ENCODE measurements at regions of chr3 and their contacts with region 1.

Region 1: DNA sequence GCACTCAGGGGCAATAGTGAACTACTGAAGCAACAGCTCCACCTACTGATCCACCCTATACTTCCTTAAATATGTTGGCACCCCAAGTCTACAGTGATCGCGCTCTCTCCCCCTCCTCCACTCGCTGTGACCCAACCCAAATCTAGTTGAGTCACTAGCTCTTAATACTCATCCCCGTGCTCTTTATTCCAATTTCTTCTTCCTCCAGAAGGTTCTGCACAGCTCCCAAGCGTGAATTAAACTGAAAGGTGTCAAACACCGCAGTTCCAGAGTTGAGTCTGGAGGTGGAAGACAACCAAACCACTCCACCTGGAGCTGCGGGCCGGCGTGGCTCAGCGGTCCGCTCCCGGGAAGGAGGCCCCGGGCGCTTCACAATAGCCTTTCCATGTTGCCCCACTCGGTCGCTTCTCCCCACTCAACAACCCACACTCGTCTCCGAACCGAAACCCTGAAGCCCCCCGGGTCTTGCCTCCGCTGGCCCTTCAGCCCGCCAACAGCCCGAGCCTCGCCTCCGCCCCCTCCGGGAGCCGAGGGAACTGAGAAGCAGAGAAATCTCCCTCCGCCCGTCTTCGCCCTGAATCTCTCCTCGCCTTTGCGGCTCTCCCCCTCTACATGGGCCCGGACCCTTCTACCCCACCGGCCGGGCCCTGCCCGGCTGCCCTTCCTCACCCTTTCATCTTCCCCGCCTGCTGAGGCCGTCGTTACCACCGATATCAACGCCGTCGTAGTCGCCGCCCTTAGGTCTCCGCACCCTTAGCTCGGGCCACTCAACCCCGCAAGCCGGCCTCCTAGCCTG is 578 bp downstream of the NAA50 start:
- DNase-seq: peak; percentile 72
- ATAC-seq: peak; percentile 75
- H3K4me3 ChIP-seq: peak overlapping the region; percentile 70
- H3K27ac ChIP-seq: peak overlapping the region; percentile 95
- H3K4me1 ChIP-seq: 0 out of 2 replicates have a peak, but pooled peaks cover 3% of the 10 kb centered on the region
- H3K27me3 ChIP-seq: no peaks in the 10 kb centered on the region
- CTCF ChIP-seq: peak; percentile 72 to 87 (median 73); a peak in 5 of 6 replicates
- EP300 ChIP-seq: no peak
- POLR2A ChIP-seq: 0 out of 2 replicates have a peak, but pooled peaks have one; percentile 24
- RAD21 ChIP-seq: peak; percentile 70

Region 2: GRCh38 chr3:113514265-113514769 is 231.2 kb before region 1 on chr3:
- CTCF ChIA-PET with region 1: interaction called, 5 read pairs
- POLR2A ChIA-PET with region 1: interaction called, 3 read pairs
- RAD21 ChIA-PET with region 1: interaction called, 20 read pairs
- SMC1A ChIA-PET with region 1: interaction called, 6 read pairs
- in situ Hi-C with region 1: no loop called
- intact Hi-C with region 1: no loop called
- DNase-seq: no peak
- ATAC-seq: peak; percentile 9
- H3K4me3 ChIP-seq: peak overlapping the region; percentile 87
- H3K27ac ChIP-seq: peak overlapping the region; percentile 76
- H3K4me1 ChIP-seq: peaks cover 12% of the 10 kb centered on the region
- H3K27me3 ChIP-seq: no peaks in the 10 kb centered on the region
- CTCF ChIP-seq: no peak
- EP300 ChIP-seq: 0 out of 4 replicates have a peak, but pooled peaks of 1 of the 2 experiments have one; percentile 35
- POLR2A ChIP-seq: no peak
- RAD21 ChIP-seq: no peak

Region 3: DNA sequence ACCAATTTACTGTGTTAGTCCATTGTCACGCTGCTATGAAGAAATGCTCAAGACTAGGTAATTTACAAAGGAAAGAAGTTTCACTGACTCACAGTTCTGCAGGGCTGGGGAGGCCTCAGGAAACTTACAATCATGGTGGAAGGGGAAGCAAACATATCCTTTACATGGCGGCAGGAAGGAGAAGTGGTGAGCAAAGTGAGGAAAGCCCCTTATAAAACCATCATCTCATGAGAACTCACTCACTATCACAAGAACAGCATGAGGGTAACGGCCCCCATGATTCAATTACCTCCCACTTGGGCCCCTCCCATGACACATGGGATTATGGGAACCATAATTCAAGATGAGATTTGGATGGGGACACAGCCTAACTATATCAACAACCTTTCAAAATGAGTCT is 69.2 kb before region 1 on chr3:
- CTCF ChIA-PET with region 1: no interaction called
- POLR2A ChIA-PET with region 1: no interaction called
- RAD21 ChIA-PET with region 1: no interaction called
- SMC1A ChIA-PET with region 1: no interaction called
- in situ Hi-C with region 1: no loop called
- intact Hi-C with region 1: no loop called
- DNase-seq: no peak
- ATAC-seq: no peak
- H3K4me3 ChIP-seq: no peak overlapping the region
- H3K27ac ChIP-seq: no peak overlapping the region
- H3K4me1 ChIP-seq: no peaks in the 10 kb centered on the region
- H3K27me3 ChIP-seq: no peaks in the 10 kb centered on the region
- CTCF ChIP-seq: no peak
- EP300 ChIP-seq: no peak
- POLR2A ChIP-seq: no peak
- RAD21 ChIP-seq: no peak

Region 4: DNA sequence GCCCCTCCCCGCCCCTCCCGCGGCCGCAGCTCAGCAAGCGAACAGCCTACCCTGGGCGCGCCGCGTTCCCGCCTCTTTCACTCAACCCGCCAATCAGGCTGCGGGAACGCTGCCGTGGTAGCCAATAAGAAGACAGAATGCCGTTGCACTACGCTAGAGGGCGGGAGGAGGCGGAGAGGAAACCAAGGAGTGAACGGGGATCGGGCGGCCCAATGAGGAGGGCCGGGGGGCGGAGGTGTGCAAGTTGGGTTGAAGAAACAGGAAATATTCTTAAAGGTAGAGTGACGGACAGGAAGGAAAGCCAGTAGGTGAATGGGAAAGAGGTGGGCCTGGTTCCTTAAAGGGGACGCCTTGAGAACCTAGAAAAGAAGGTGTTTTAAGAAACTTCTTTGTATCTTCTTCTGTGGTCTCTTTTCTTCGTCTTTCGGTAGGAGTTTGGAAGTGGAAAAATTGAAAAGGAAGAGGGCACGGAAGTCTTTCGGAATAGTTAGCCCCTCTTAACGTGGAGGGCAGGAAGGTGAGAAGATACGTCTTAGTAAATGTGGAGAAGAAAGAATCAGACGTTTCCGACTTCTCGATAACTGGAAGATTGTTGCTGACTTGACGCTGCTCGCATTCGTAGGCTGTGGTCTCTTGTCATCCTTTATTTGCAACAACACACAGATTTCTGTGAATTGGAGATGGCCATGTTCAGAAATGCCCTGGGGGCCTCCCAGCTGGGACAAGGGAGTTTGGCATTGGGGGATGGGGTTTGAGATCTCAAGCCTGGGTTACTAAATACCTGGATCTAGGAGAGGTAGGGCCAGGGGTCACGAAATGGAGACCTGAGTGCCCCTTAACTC is 48.6 kb before region 1 on chr3:
- CTCF ChIA-PET with region 1: interaction called, 18 read pairs
- POLR2A ChIA-PET with region 1: interaction called, 9 read pairs
- RAD21 ChIA-PET with region 1: interaction called, 15 read pairs
- SMC1A ChIA-PET with region 1: interaction called, 5 read pairs
- in situ Hi-C with region 1: no loop called
- intact Hi-C with region 1: no loop called
- DNase-seq: peak; percentile 98
- ATAC-seq: peak; percentile 93
- H3K4me3 ChIP-seq: peak overlapping the region; percentile 88
- H3K27ac ChIP-seq: peak overlapping the region; percentile 81
- H3K4me1 ChIP-seq: peaks cover 8% of the 10 kb centered on the region; the same call in 1 of the 2 replicates
- H3K27me3 ChIP-seq: no peaks in the 10 kb centered on the region
- CTCF ChIP-seq: no peak
- EP300 ChIP-seq: no peak
- POLR2A ChIP-seq: no peak
- RAD21 ChIP-seq: no peak

Region 5: GRCh38 chr3:113783463-113783862 is 38.0 kb after region 1 on chr3:
- CTCF ChIA-PET with region 1: interaction called, 4 read pairs
- POLR2A ChIA-PET with region 1: interaction called, 12 read pairs
- RAD21 ChIA-PET with region 1: interaction called, 7 read pairs
- SMC1A ChIA-PET with region 1: interaction called, 5 read pairs
- in situ Hi-C with region 1: no loop called
- intact Hi-C with region 1: no loop called
- DNase-seq: no peak
- ATAC-seq: peak; percentile 91
- H3K4me3 ChIP-seq: no peak overlapping the region
- H3K27ac ChIP-seq: no peak overlapping the region
- H3K4me1 ChIP-seq: peaks cover 7% of the 10 kb centered on the region
- H3K27me3 ChIP-seq: no peaks in the 10 kb centered on the region
- CTCF ChIP-seq: no peak
- EP300 ChIP-seq: peak in 1 of 2 experiments; percentile 51; a peak in 1 of 4 replicates
- POLR2A ChIP-seq: no peak
- RAD21 ChIP-seq: no peak

Region 6: DNA sequence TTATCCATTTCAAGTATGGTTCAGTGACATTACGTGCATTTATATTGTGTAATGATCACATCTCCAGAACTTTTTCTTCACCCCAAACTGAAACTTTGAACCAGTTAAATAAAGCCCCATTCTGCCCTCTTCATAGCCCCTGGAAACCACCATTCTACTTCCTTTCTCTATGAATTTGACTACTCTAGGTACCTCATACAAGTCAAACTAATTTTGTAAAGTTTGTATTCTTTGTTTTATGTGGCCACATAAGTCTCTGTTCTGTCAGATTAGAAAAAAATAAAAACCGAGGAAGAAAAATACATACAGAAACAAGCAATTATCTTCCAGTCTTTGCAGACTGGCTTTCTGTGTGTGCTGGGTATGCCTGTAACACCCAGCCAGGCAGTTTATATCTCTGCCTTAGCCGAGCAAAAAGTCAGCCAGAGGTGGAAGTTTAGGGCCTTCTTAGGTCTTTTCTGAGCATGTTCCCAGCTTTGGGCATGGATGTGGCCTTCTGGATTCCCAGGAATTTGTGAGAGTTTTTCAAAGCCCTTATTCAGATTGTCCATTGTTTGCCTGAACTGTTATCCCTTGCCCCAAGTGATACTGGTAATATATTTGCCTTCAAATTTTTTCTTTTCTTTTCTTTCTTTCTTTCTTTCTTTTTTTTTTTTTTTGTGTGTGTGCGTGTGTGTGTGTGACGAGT is 87.2 kb after region 1 on chr3:
- CTCF ChIA-PET with region 1: interaction called, 72 read pairs
- POLR2A ChIA-PET with region 1: interaction called, 24 read pairs
- RAD21 ChIA-PET with region 1: interaction called, 13 read pairs
- SMC1A ChIA-PET with region 1: interaction called, 7 read pairs
- in situ Hi-C with region 1: no loop called
- intact Hi-C with region 1: loop called (anchors 2 kb)
- DNase-seq: peak; percentile 47
- ATAC-seq: peak; percentile 69
- H3K4me3 ChIP-seq: no peak overlapping the region
- H3K27ac ChIP-seq: peak overlapping the region; percentile 71
- H3K4me1 ChIP-seq: peaks cover 50% of the 10 kb centered on the region
- H3K27me3 ChIP-seq: no peaks in the 10 kb centered on the region
- CTCF ChIP-seq: no peak
- EP300 ChIP-seq: peak; percentile 50 to 59; a peak in 2 of 4 replicates
- POLR2A ChIP-seq: no peak
- RAD21 ChIP-seq: no peak

Region 7: DNA sequence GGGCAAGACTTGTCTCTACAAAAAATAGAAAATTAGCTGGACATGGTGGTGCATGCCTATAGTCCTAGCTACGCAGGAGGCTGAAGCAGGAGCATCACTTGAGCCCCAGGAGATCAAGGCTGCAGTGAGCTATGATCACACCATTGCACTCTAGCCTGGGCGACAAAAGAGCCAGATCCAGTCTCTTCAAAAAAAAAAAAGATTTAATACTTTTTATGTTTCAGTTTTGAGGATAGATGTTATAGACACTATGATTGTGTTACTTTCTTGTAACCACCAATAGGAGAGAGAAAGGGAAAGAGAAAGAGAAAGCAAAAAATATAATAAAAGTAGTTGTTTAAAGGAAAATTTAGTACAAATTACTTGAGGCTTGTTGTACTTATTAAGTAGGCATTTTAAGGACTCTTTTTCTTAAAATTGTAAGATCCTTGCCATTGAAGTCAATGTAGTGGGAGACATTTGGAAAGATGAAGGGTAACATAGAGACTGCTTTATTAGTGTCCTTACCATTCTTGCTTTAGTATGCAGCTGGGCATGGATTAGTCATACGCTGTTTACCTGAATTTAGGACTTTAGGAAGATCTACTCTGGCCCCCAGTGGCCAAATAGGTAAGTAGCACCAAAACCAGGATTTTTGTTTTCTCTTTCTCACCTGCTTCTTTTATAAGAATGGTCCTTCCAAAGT is 167.2 kb after region 1 on chr3:
- CTCF ChIA-PET with region 1: interaction called, 26 read pairs
- POLR2A ChIA-PET with region 1: no interaction called
- RAD21 ChIA-PET with region 1: interaction called, 16 read pairs
- SMC1A ChIA-PET with region 1: interaction called, 12 read pairs
- in situ Hi-C with region 1: no loop called
- intact Hi-C with region 1: no loop called
- DNase-seq: peak; percentile 35
- ATAC-seq: peak; percentile 98
- H3K4me3 ChIP-seq: no peak overlapping the region
- H3K27ac ChIP-seq: no peak overlapping the region
- H3K4me1 ChIP-seq: no peaks in the 10 kb centered on the region
- H3K27me3 ChIP-seq: no peaks in the 10 kb centered on the region
- CTCF ChIP-seq: peak; percentile 76 to 89 (median 79)
- EP300 ChIP-seq: no peak
- POLR2A ChIP-seq: no peak
- RAD21 ChIP-seq: peak; percentile 95

Region 8: GRCh38 chr3:114454551-114455251 is 709.2 kb after region 1 on chr3:
- CTCF ChIA-PET with region 1: no interaction called
- POLR2A ChIA-PET with region 1: no interaction called
- RAD21 ChIA-PET with region 1: no interaction called
- SMC1A ChIA-PET with region 1: no interaction called
- in situ Hi-C with region 1: no loop called
- intact Hi-C with region 1: loop called (anchors 10 kb)
- DNase-seq: no peak
- ATAC-seq: peak; percentile 10
- H3K4me3 ChIP-seq: peak overlapping the region; percentile 74
- H3K27ac ChIP-seq: peak overlapping the region; percentile 80
- H3K4me1 ChIP-seq: peaks cover 32% of the 10 kb centered on the region
- H3K27me3 ChIP-seq: no peaks in the 10 kb centered on the region
- CTCF ChIP-seq: no peak
- EP300 ChIP-seq: no peak
- POLR2A ChIP-seq: no peak
- RAD21 ChIP-seq: no peak

Measured in GM12878 (cell line).